CD4-positive, alpha-beta memory T cell (primary cell): ENCODE measurements at regions of chr11 and their contacts with region 1.

Region 1: DNA sequence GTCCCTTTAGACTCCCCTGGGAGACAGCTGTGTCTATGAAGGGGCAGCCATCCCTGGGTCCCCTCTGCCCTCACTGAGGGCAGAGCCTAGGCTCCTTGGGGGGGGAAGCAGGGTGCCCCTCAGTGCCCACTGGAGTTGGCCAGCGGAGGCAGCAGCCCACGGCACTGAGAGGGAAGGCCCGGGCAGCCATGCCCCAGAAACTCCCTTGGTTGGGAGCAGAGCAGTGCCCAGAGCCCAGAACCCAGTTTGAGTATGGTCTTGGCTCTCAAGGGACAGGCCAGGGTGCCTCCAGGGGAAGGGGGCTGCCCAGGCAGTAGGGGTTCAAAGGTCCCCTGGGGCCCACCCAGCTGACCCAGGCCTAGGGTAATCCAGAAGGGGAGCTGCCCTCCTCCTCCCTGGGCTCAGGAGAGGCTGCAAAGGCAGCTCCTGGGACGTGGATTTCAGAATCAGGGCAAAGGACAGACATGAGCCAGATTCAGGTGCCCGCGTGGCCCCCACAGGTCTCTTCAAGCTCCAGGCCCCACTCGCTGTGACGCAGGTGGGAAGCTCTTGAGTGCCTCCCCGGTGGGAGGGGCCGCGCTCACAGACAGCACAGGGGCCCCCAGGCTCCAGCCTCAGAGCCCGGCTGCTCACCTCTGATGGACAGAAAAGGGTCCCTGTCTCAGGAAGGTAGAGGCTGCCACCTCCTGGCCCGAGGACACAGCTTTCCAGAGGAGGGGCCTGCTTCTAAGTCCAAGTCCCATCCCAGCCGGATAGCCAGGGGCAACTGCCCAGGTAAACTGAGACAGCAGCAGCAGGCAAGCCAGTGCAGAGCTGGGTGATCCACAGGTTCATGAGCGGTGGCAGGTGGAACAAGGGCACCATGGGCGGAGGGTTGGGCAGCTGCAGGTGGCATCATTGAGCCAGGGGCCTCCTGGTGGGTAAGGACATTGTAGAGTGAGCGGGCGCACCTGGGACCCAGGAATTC is 2.6 kb downstream of the C11orf21 start:
- DNase-seq: peak in 1 of 5 donors; percentile 12
- H3K4me3 ChIP-seq: no peak overlapping the region
- H3K4me3 Mint-ChIP-seq: peak overlapping the region in 6 of 8 donors; percentile 27 to 83 (median 66)
- H3K27ac ChIP-seq: no peak overlapping the region
- H3K27ac Mint-ChIP-seq: peak overlapping the region; percentile 22 to 86 (median 78)
- H3K4me1 ChIP-seq: peaks cover 61% of the 10 kb centered on the region
- H3K4me1 Mint-ChIP-seq: peaks cover 20 to 69% (median 33%) of the 10 kb centered on the region in 4 donors
- H3K27me3 ChIP-seq: no peaks in the 10 kb centered on the region
- H3K27me3 Mint-ChIP-seq: no peaks in the 10 kb centered on the region

Region 2: GRCh38 chr11:2122222-2123085 is 176.6 kb before region 1 on chr11:
- CTCF ChIA-PET with region 1: no interaction called
- POLR2A ChIA-PET with region 1: no interaction called
- intact Hi-C with region 1: no loop called
- DNase-seq: no peak
- H3K4me3 ChIP-seq: no peak overlapping the region
- H3K4me3 Mint-ChIP-seq: no peak overlapping the region
- H3K27ac ChIP-seq: no peak overlapping the region
- H3K27ac Mint-ChIP-seq: no peak overlapping the region
- H3K4me1 ChIP-seq: no peaks in the 10 kb centered on the region
- H3K4me1 Mint-ChIP-seq: no peaks in the 10 kb centered on the region
- H3K27me3 ChIP-seq: no peaks in the 10 kb centered on the region
- H3K27me3 Mint-ChIP-seq: peaks cover 19 to 23% of the 10 kb centered on the region in 2 donors

Region 3: GRCh38 chr11:2196970-2197770 is 101.9 kb before region 1 on chr11:
- CTCF ChIA-PET with region 1: interaction called, 11 read pairs
- POLR2A ChIA-PET with region 1: no interaction called
- intact Hi-C with region 1: loop called (anchors 1 kb)
- DNase-seq: peak; percentile 55 to 69 (median 65)
- H3K4me3 ChIP-seq: no peak overlapping the region
- H3K4me3 Mint-ChIP-seq: no peak overlapping the region
- H3K27ac ChIP-seq: no peak overlapping the region
- H3K27ac Mint-ChIP-seq: peak overlapping the region in 3 of 7 donors; percentile 45 to 75 (median 63)
- H3K4me1 ChIP-seq: no peaks in the 10 kb centered on the region
- H3K4me1 Mint-ChIP-seq: peaks cover 0 to 11% (median 5%) of the 10 kb centered on the region in 4 donors
- H3K27me3 ChIP-seq: no peaks in the 10 kb centered on the region
- H3K27me3 Mint-ChIP-seq: peaks cover 1 to 5% of the 10 kb centered on the region in 2 donors

Region 4: GRCh38 chr11:2314525-2315394 is 15.7 kb after region 1 on chr11:
- CTCF ChIA-PET with region 1: interaction called, 19 read pairs
- POLR2A ChIA-PET with region 1: interaction called, 16 read pairs
- intact Hi-C with region 1: no loop called
- DNase-seq: no peak
- H3K4me3 ChIP-seq: no peak overlapping the region
- H3K4me3 Mint-ChIP-seq: no peak overlapping the region
- H3K27ac ChIP-seq: no peak overlapping the region
- H3K27ac Mint-ChIP-seq: no peak overlapping the region
- H3K4me1 ChIP-seq: no peaks in the 10 kb centered on the region
- H3K4me1 Mint-ChIP-seq: no peaks in the 10 kb centered on the region
- H3K27me3 ChIP-seq: no peaks in the 10 kb centered on the region
- H3K27me3 Mint-ChIP-seq: peaks cover 0 to 3% of the 10 kb centered on the region in 2 donors

Region 5: GRCh38 chr11:2377511-2378443 is 78.7 kb after region 1 on chr11:
- CTCF ChIA-PET with region 1: interaction called, 7 read pairs
- POLR2A ChIA-PET with region 1: interaction called, 22 read pairs
- intact Hi-C with region 1: loop called (anchors 5 kb)
- DNase-seq: peak in 4 of 5 donors; percentile 45 to 66 (median 58)
- H3K4me3 ChIP-seq: peak overlapping the region; percentile 29 to 76
- H3K4me3 Mint-ChIP-seq: peak overlapping the region; percentile 80 to 88 (median 82)
- H3K27ac ChIP-seq: peak overlapping the region; percentile 77
- H3K27ac Mint-ChIP-seq: peak overlapping the region; percentile 66 to 90 (median 77)
- H3K4me1 ChIP-seq: peaks cover 39% of the 10 kb centered on the region
- H3K4me1 Mint-ChIP-seq: peaks cover 11 to 41% (median 26%) of the 10 kb centered on the region in 4 donors
- H3K27me3 ChIP-seq: no peaks in the 10 kb centered on the region
- H3K27me3 Mint-ChIP-seq: no peaks in the 10 kb centered on the region

Region 6: GRCh38 chr11:2390725-2391151 is 91.7 kb after region 1 on chr11:
- CTCF ChIA-PET with region 1: interaction called, 17 read pairs
- POLR2A ChIA-PET with region 1: interaction called, 16 read pairs
- intact Hi-C with region 1: no loop called
- DNase-seq: no peak
- H3K4me3 ChIP-seq: no peak overlapping the region
- H3K4me3 Mint-ChIP-seq: no peak overlapping the region
- H3K27ac ChIP-seq: no peak overlapping the region
- H3K27ac Mint-ChIP-seq: peak overlapping the region in 4 of 7 donors; percentile 64 to 86 (median 72)
- H3K4me1 ChIP-seq: peaks cover 44% of the 10 kb centered on the region
- H3K4me1 Mint-ChIP-seq: peaks cover 15 to 43% (median 29%) of the 10 kb centered on the region in 4 donors
- H3K27me3 ChIP-seq: no peaks in the 10 kb centered on the region
- H3K27me3 Mint-ChIP-seq: no peaks in the 10 kb centered on the region